GM10248 (cell line): ENCODE measurements at regions of chr7 and their contacts with region 1.

Region 1: DNA sequence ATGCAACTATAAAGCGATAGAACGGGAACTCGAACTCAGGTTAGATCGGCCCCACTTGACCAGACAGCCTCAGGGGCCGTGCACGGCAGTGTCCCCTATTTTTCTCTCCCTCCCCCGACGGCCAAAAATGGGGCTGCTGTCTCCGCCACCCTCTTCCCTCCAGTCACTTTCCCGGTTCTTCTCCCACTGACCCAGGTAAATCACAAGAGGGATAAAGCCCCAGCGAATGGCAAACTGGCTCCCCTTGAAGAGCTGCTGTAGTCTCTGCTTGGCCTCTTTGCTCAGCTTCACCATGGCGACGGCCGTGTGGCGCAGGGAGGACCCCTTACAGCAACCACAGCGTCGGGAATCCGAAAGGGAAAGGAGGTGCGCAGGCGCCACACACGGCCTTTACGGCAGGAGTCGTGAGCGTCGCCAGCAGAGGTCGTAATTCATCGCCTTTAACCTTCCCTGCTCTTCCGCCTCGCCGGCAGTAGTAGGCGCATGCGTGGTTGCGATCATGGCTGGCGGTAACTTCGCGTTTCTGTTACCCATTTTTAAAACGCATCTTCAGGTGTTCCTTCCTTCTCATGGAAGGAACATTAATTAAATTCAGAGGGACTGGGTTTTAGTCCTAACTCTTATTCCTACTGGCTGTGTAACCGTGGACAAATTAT is at the start of gene TOMM7:
- DNase-seq: peak; percentile 96
- CTCF ChIP-seq: peak; percentile 50

Region 2: DNA sequence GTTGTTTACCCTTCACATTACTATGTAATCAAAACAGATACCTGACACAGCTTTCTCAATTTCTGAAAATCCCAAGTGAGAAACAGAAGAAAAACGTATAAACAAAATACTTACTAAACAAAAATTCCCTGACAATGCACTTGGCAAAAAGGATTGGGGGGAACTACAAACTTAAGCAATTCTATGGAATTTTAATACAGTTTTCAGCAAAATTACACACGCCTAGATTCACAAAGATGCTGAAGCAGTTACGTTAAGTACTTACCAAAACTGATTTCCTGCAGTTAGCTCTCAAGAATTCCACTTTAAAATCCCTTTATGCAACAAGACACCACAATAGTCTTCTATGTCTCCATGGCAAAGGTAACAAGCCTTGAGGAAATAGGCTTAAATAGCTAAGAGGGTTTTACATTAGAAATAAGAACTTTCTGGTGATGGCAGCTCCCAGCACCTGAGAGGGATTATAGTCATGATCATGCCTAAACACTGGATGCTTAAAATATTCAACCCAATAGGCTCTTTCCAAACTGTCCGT is 10.8 kb before region 1 on chr7:
- CTCF ChIA-PET with region 1: interaction called, 11 read pairs
- POLR2A ChIA-PET with region 1: no interaction called
- DNase-seq: no peak
- CTCF ChIP-seq: no peak

Region 3: GRCh38 chr7:23076774-23077173 is 254.2 kb after region 1 on chr7:
- CTCF ChIA-PET with region 1: no interaction called
- POLR2A ChIA-PET with region 1: no interaction called
- DNase-seq: no peak
- CTCF ChIP-seq: no peak